CD4-positive, alpha-beta memory T cell (primary cell): ENCODE measurements at regions of chr5 and their contacts with region 1.

Region 1: DNA sequence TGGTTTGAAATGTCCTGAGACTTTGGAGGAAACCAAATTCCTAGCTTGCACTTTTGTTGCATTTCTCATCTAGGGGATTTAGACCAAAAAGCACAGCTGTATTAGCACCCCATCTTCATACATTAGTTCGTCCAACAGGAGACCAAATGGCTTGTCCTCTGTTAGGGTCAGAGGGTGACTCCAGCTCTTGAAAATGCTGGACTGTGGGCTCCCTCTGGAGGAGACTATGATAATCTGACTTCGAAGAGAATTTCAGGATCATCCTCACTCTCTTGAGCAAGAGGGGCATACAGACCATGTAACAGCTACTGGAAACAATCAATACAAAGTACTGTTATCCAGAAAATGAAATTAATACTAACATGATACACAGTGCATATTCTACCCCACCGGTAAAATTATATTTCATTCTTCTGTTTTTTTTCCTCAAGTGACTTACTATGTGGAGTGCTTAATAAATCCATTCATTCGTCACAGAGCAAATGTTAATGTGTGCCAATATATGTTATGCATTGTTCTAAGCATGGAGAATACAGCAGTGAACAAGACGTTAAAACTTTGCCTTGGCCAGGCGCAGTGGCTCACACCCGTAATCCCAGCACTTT is 63.7 kb upstream of the PPP2CA start:
- DNase-seq: peak; percentile 50 to 55 (median 52)
- H3K4me3 ChIP-seq: no peak overlapping the region
- H3K4me3 Mint-ChIP-seq: no peak overlapping the region
- H3K27ac ChIP-seq: no peak overlapping the region
- H3K27ac Mint-ChIP-seq: peak overlapping the region in 2 of 7 donors; percentile 17 to 32
- H3K4me1 ChIP-seq: no peaks in the 10 kb centered on the region
- H3K4me1 Mint-ChIP-seq: no peaks in the 10 kb centered on the region
- H3K27me3 ChIP-seq: no peaks in the 10 kb centered on the region
- H3K27me3 Mint-ChIP-seq: peaks cover 3 to 5% of the 10 kb centered on the region in 2 donors

Region 2: DNA sequence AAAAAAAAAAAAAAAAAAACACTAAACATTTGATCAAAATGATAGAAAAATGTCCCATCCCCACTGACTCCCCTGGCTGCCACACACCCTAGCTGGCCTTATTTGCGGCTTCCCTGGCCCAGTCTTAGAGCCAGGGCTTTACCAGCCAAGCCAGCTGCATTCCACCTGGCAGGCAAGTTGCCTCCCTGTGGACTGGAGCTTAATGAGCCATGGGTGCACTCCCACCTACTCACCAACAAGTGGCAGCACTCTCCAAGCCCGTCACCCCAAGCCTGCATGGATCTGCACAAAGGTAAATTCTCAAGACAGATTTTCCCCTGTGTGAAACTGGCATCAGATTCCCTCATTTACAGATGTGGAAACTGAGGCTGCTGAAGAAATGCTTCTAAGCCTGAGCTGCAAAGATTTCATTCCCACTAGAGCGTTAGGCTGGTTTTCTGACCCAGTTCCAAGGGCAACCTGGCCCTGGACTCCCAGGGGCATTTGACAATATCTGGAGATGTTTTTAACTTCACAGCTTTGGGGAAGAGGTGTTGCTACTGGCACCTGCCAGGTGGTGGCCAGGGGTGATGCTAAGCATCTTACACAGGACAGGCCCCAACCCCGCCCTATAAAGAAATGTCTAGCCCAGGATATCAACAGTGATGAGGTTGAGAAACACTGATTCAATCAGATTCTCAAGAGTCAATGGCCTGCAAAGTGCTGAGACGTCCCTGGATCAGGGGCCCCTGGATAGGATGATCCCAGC is 262.9 kb before region 1 on chr5:
- CTCF ChIA-PET with region 1: interaction called, 8 read pairs
- POLR2A ChIA-PET with region 1: no interaction called
- intact Hi-C with region 1: loop called (anchors 1 kb)
- DNase-seq: peak; percentile 41 to 64 (median 48)
- H3K4me3 ChIP-seq: no peak overlapping the region
- H3K4me3 Mint-ChIP-seq: no peak overlapping the region
- H3K27ac ChIP-seq: no peak overlapping the region
- H3K27ac Mint-ChIP-seq: peak overlapping the region in 1 of 7 donors; percentile 70
- H3K4me1 ChIP-seq: no peaks in the 10 kb centered on the region
- H3K4me1 Mint-ChIP-seq: peaks cover 0 to 2% (median 0%) of the 10 kb centered on the region in 4 donors
- H3K27me3 ChIP-seq: no peaks in the 10 kb centered on the region
- H3K27me3 Mint-ChIP-seq: peaks cover 0 to 9% of the 10 kb centered on the region in 2 donors

Region 3: GRCh38 chr5:134184155-134185135 is 105.2 kb before region 1 on chr5:
- CTCF ChIA-PET with region 1: interaction called, 178 read pairs
- POLR2A ChIA-PET with region 1: interaction called, 8 read pairs
- intact Hi-C with region 1: loop called (anchors 1 kb)
- DNase-seq: peak; percentile 72 to 79 (median 74)
- H3K4me3 ChIP-seq: no peak overlapping the region
- H3K4me3 Mint-ChIP-seq: no peak overlapping the region
- H3K27ac ChIP-seq: no peak overlapping the region
- H3K27ac Mint-ChIP-seq: peak overlapping the region in 3 of 7 donors; percentile 21 to 63 (median 50)
- H3K4me1 ChIP-seq: no peaks in the 10 kb centered on the region
- H3K4me1 Mint-ChIP-seq: peaks cover 0 to 3% (median 1%) of the 10 kb centered on the region in 4 donors
- H3K27me3 ChIP-seq: no peaks in the 10 kb centered on the region
- H3K27me3 Mint-ChIP-seq: no peaks in the 10 kb centered on the region

Region 4: GRCh38 chr5:134275822-134276221 is 13.8 kb before region 1 on chr5:
- CTCF ChIA-PET with region 1: interaction called, 11 read pairs
- POLR2A ChIA-PET with region 1: interaction called, 3 read pairs
- intact Hi-C with region 1: no loop called
- DNase-seq: no peak
- H3K4me3 ChIP-seq: no peak overlapping the region
- H3K4me3 Mint-ChIP-seq: no peak overlapping the region
- H3K27ac ChIP-seq: no peak overlapping the region
- H3K27ac Mint-ChIP-seq: peak overlapping the region in 1 of 7 donors; percentile 7
- H3K4me1 ChIP-seq: peaks cover 8% of the 10 kb centered on the region
- H3K4me1 Mint-ChIP-seq: peaks cover 2 to 8% (median 6%) of the 10 kb centered on the region in 4 donors
- H3K27me3 ChIP-seq: no peaks in the 10 kb centered on the region
- H3K27me3 Mint-ChIP-seq: peaks cover 3 to 4% of the 10 kb centered on the region in 2 donors